Heart left ventricle (tissue), 16 donors: ENCODE measurements at regions of chr3 and their contacts with region 1.

Region 1: GRCh38 chr3:81760924-81761903 is at the start of gene GBE1:
- DNase-seq: peak; percentile 93 to 96 (median 95)
- ATAC-seq: peak; percentile 90 to 95 (median 92)
- H3K4me3 ChIP-seq: peak within 1 kb of the TSS; percentile 48 to 79 (median 68)
- H3K27ac ChIP-seq: peak within 1 kb of the TSS; percentile 91 to 100 (median 98)
- H3K4me1 ChIP-seq: peaks cover 0 to 66% (median 41%) of the 10 kb centered on the region in 12 donors
- H3K27me3 ChIP-seq: no peaks in the 10 kb centered on the region
- CTCF ChIP-seq: peak in 10 of 12 donors; percentile 22 to 64 (median 36)
- POLR2A ChIP-seq: peak; percentile 5 to 75
- total RNA-seq, gene GBE1: 54.5 to 197 (median 95.9) TPM

Region 2: GRCh38 chr3:81490541-81491288 is 270.5 kb before region 1 on chr3:
- intact Hi-C with region 1: loop called in 1 of 10 experiments (anchors 10 kb)
- DNase-seq: peak; percentile 41 to 84 (median 71)
- ATAC-seq: peak; percentile 55 to 92 (median 90)
- H3K4me3 ChIP-seq: no peak overlapping the region
- H3K27ac ChIP-seq: peak overlapping the region in 2 of 12 donors; percentile 30 to 31
- H3K4me1 ChIP-seq: peaks cover 0 to 29% (median 8%) of the 10 kb centered on the region in 12 donors
- H3K27me3 ChIP-seq: no peaks in the 10 kb centered on the region
- CTCF ChIP-seq: peak; percentile 63 to 82 (median 70)
- POLR2A ChIP-seq: no peak

Region 3: GRCh38 chr3:81666493-81667121 is 94.6 kb before region 1 on chr3:
- intact Hi-C with region 1: loop called in 6 of 10 experiments (anchors 5 to 10 kb)
- DNase-seq: no peak
- ATAC-seq: peak in 1 of 4 donors; percentile 44
- H3K4me3 ChIP-seq: no peak overlapping the region
- H3K27ac ChIP-seq: no peak overlapping the region
- H3K4me1 ChIP-seq: peaks cover 0 to 35% (median 12%) of the 10 kb centered on the region in 12 donors
- H3K27me3 ChIP-seq: no peaks in the 10 kb centered on the region
- CTCF ChIP-seq: peak; percentile 57 to 88 (median 78)
- POLR2A ChIP-seq: no peak

Region 4: DNA sequence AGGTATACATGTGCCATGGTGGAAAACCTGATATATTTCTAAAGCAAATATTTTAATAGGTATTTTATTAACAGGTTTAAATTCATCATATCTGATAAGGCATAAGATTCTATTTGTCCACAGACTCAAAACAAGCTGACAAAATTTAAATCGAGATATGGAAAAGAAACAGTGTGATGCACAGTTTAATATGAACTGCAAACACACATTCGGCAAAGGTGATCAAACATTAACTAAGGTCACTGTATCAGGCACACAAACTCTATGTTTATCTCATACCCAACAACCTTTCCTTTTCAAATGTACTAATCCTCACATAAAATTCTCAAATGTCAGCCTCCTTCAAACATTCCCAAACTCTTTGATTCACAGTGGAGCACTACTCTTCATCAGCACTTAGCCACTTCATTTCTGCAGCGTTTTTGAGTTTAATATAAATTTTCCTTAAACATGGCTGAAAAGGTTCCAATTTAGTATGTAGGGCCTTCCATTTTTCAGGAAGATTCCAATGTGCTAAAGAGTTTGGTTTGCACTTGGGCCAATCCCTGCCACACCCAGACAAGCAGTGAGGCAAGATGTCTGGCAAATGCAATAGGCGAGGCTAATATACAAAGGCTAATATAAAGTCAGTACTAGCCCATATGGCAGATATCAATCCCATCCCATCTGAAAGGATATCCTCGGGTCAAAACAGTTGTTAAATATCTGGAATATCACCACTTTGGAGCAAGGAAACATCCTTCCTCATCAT is 84.3 kb before region 1 on chr3:
- intact Hi-C with region 1: loop called in 2 of 10 experiments (anchors 10 kb)
- DNase-seq: no peak
- ATAC-seq: no peak
- H3K4me3 ChIP-seq: no peak overlapping the region
- H3K27ac ChIP-seq: no peak overlapping the region
- H3K4me1 ChIP-seq: no peaks in the 10 kb centered on the region
- H3K27me3 ChIP-seq: no peaks in the 10 kb centered on the region
- CTCF ChIP-seq: no peak
- POLR2A ChIP-seq: no peak

Region 5: GRCh38 chr3:81713031-81713430 is 48.2 kb before region 1 on chr3:
- intact Hi-C with region 1: loop called in 1 of 10 experiments (anchors 5 kb)
- DNase-seq: no peak
- ATAC-seq: no peak
- H3K4me3 ChIP-seq: no peak overlapping the region
- H3K27ac ChIP-seq: no peak overlapping the region
- H3K4me1 ChIP-seq: peaks cover 0 to 27% (median 12%) of the 10 kb centered on the region in 12 donors
- H3K27me3 ChIP-seq: no peaks in the 10 kb centered on the region
- CTCF ChIP-seq: no peak
- POLR2A ChIP-seq: no peak

Region 6: GRCh38 chr3:81788610-81789009 is 27.4 kb after region 1 on chr3:
- intact Hi-C with region 1: loop called in 2 of 10 experiments (anchors 2 kb)
- DNase-seq: no peak
- ATAC-seq: peak; percentile 90 to 97 (median 94)
- H3K4me3 ChIP-seq: peak overlapping the region in 1 of 12 donors; percentile 27
- H3K27ac ChIP-seq: peak overlapping the region in 11 of 12 donors; percentile 44 to 78 (median 64)
- H3K4me1 ChIP-seq: peaks cover 0 to 27% (median 21%) of the 10 kb centered on the region in 12 donors
- H3K27me3 ChIP-seq: no peaks in the 10 kb centered on the region
- CTCF ChIP-seq: no peak
- POLR2A ChIP-seq: peak in 1 of 2 donors; percentile 9

Region 7: GRCh38 chr3:81841540-81841939 is 80.3 kb after region 1 on chr3:
- intact Hi-C with region 1: loop called in 2 of 10 experiments (anchors 5 to 10 kb)
- DNase-seq: no peak
- ATAC-seq: no peak
- H3K4me3 ChIP-seq: no peak overlapping the region
- H3K27ac ChIP-seq: no peak overlapping the region
- H3K4me1 ChIP-seq: peaks cover 0 to 46% (median 24%) of the 10 kb centered on the region in 12 donors
- H3K27me3 ChIP-seq: no peaks in the 10 kb centered on the region
- CTCF ChIP-seq: no peak
- POLR2A ChIP-seq: no peak

Region 8: DNA sequence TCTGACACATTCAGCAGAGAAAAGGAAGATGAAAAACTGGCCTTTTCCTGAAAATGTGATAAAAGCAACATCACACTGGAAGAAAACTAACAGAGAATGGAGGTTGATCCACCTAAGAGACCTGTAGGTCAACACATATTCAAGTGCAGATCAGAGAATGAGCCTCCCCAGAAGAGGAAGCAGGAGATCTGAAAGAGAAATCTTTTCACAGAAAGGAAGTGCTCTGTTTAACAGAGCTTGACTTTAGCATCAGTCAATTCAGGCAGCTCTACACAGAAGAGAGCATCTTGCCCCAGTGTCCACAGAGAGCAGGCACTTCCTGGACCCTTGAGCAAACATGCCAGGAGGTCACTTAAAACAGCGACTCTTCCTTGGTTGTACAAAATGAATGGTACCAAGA is 655.6 kb after region 1 on chr3:
- intact Hi-C with region 1: no loop called
- DNase-seq: no peak
- ATAC-seq: no peak
- H3K4me3 ChIP-seq: no peak overlapping the region
- H3K27ac ChIP-seq: no peak overlapping the region
- H3K4me1 ChIP-seq: no peaks in the 10 kb centered on the region
- H3K27me3 ChIP-seq: no peaks in the 10 kb centered on the region
- CTCF ChIP-seq: no peak
- POLR2A ChIP-seq: no peak